Testis (tissue), 5 donors: ENCODE measurements at regions of chr14 and their contacts with region 1.

Region 1: GRCh38 chr14:85344847-85345570 is 184.9 kb upstream of the FLRT2 start:
- DNase-seq: peak; percentile 36
- H3K4me3 ChIP-seq: no peak overlapping the region
- H3K27ac ChIP-seq: no peak overlapping the region
- H3K4me1 ChIP-seq: no peaks in the 10 kb centered on the region
- H3K27me3 ChIP-seq: no peaks in the 10 kb centered on the region
- CTCF ChIP-seq: no peak
- POLR2A ChIP-seq: no peak

Region 2: GRCh38 chr14:85528080-85528896 is 183.3 kb after region 1 on chr14:
- intact Hi-C with region 1: loop called (anchors 5 kb)
- DNase-seq: peak; percentile 74
- H3K4me3 ChIP-seq: peak overlapping the region; percentile 72 to 76
- H3K27ac ChIP-seq: peak overlapping the region; percentile 87 to 92
- H3K4me1 ChIP-seq: peaks cover 3% of the 10 kb centered on the region
- H3K27me3 ChIP-seq: no peaks in the 10 kb centered on the region
- CTCF ChIP-seq: peak in 2 of 3 experiments; percentile 41 to 43
- POLR2A ChIP-seq: no peak